MCF 10A (cell line): ENCODE measurements at regions of chr5 and their contacts with region 1.

Region 1: DNA sequence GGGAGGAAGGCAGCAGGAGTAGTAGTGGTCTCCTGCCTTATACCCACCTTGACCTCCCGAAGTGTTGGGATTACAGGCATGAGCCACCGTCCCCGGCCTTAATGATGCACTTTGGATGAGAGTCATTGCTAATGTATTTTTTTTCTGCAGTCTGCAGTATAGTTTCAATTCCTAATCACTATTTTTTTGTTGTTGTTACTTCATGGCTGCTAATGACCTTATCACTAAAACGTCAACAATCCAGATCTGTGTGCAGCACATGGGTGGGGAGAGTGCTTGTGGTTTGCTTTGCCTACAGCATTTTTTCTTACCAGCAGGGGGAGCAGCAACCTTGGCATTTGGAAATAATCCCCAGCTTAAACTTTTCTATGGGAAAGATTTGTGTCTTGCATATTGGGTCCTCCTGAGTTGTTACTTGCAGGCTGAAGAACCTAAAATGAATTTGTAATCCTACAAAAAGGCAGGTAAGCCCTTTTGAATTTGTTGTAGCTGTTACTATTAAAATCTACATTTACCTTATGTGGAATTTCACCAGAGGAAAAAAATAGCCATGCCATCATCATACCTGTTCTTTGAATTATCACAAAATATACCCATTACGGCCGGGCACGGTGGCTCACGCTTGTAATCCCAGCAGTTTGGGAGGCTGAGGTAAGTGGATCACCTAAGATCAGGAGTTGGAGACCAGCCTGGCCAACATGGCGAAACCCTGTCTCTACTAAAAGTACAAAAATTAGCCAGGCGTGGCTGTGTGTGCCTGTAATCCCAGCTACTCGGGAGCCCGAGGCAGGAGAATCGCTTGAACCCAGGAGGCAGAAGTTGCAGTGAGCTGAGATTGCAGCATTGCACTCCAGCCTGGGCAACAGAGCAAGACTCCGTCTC is 6.3 kb upstream of the MED7 start:
- DNase-seq: peak; percentile 81
- H3K4me3 Mint-ChIP-seq: no peak overlapping the region
- H3K27ac Mint-ChIP-seq: no peak overlapping the region
- H3K4me1 Mint-ChIP-seq: peaks cover 6% of the 10 kb centered on the region
- H3K27me3 Mint-ChIP-seq: no peaks in the 10 kb centered on the region
- CTCF ChIP-seq: peak; percentile 90

Region 2: GRCh38 chr5:157161996-157162395 is 13.0 kb after region 1 on chr5:
- CTCF ChIA-PET with region 1: interaction called, 20 read pairs
- POLR2A ChIA-PET with region 1: interaction called, 4 read pairs
- intact Hi-C with region 1: no loop called
- DNase-seq: no peak
- H3K4me3 Mint-ChIP-seq: no peak overlapping the region
- H3K27ac Mint-ChIP-seq: no peak overlapping the region
- H3K4me1 Mint-ChIP-seq: no peaks in the 10 kb centered on the region
- H3K27me3 Mint-ChIP-seq: peaks cover 15% of the 10 kb centered on the region
- CTCF ChIP-seq: no peak

Region 3: DNA sequence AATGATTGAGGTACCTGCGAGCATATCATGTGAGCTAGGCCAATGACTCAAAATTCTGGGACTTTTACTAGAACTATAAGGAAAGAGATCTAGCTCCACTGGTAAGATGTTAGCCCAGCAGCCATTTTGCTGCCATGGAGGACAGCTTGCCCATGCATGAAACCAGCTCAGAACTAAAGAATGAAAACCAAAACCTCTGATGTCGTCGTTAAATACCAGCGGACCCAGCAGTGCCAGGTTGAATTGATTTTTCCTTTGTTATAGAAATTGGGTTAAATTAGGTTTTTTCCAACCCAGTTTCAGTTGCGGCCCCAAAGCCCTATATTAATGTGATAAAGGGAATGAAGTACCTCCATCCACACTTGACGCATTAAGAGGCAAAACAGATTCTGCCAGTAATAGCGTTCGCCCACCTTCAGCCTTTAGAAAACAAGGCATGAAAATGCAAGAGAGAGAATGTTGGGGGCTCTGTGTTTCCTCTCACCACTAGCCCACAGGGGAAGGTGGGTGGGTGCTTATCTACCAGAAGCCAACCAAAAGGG is 26.2 kb after region 1 on chr5:
- CTCF ChIA-PET with region 1: interaction called, 26 read pairs
- POLR2A ChIA-PET with region 1: no interaction called
- intact Hi-C with region 1: no loop called
- DNase-seq: no peak
- H3K4me3 Mint-ChIP-seq: no peak overlapping the region
- H3K27ac Mint-ChIP-seq: no peak overlapping the region
- H3K4me1 Mint-ChIP-seq: no peaks in the 10 kb centered on the region
- H3K27me3 Mint-ChIP-seq: no peaks in the 10 kb centered on the region
- CTCF ChIP-seq: no peak

Region 4: DNA sequence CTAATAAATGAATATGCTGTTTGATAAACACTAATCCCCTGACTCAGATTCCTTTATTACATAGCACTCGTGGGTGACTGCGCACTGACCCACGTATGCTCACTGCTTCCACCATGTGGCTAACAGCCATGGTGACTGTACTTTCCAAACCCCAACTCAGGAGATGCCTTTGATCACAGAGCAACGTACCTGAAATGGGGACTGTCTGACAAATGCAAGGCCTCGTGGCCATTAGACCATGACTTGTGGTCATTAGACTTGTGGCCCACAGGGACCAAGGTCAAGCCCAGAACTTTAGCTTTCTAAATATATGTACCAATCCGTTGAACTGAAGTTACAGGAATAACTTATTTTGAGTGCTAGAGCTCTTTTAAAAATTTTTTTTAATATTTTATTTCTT is 163.5 kb after region 1 on chr5:
- CTCF ChIA-PET with region 1: interaction called, 28 read pairs
- POLR2A ChIA-PET with region 1: no interaction called
- intact Hi-C with region 1: loop called (anchors 1 kb)
- DNase-seq: peak; percentile 67
- H3K4me3 Mint-ChIP-seq: no peak overlapping the region
- H3K27ac Mint-ChIP-seq: no peak overlapping the region
- H3K4me1 Mint-ChIP-seq: no peaks in the 10 kb centered on the region
- H3K27me3 Mint-ChIP-seq: no peaks in the 10 kb centered on the region
- CTCF ChIP-seq: peak; percentile 82